ENCODE measurements at regions of chr7 and their contacts with region 1.

Region 1: DNA sequence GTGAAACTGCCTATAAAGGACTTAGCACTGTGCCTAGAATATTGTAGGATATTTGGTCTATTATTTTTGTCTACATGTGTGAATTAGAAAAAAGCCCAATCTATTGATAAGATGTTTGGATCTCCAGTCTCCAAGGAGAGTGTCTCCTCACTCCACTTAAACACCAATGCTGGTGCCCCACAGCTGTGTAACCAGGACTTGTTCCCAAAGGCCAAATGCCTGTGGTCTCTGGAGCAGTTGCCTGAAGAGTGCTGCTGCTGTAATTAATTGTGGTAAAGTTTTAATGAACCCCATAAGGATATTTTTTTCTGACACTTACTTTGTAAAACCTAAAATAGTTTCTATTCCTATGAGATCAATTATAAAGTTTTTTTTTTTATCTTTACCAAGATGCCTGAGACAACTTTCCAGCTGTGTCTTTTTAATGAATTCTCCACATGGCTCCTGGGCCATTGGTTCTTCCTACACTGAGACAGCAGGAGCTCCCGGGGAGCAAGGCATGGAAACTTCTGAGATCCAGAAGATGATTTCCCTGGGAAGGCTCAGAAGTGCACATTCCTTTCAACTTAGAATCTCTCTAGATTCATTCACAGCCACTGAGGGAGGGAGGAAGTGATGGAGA is 11.2 kb upstream of the OR2A5 start:
- DNase-seq: no peak
- ATAC-seq: no peak
- H3K4me3 ChIP-seq: no peak overlapping the region
- H3K4me3 Mint-ChIP-seq: no peak overlapping the region
- H3K27ac ChIP-seq: no peak overlapping the region
- H3K27ac Mint-ChIP-seq: no peak overlapping the region
- H3K4me1 ChIP-seq: no peaks in the 10 kb centered on the region
- H3K4me1 Mint-ChIP-seq: no peaks in the 10 kb centered on the region
- H3K27me3 ChIP-seq: no peaks in the 10 kb centered on the region
- H3K27me3 Mint-ChIP-seq: peaks cover 6 to 23% (median 13%) of the 10 kb centered on the region in 5 donors

Region 2: GRCh38 chr7:143147072-143147694 is 890.3 kb before region 1 on chr7:
- CTCF ChIA-PET with region 1: no interaction called
- POLR2A ChIA-PET with region 1: no interaction called
- intact Hi-C with region 1: no loop called
- DNase-seq: no peak
- ATAC-seq: no peak
- H3K4me3 ChIP-seq: no peak overlapping the region
- H3K4me3 Mint-ChIP-seq: no peak overlapping the region
- H3K27ac ChIP-seq: no peak overlapping the region
- H3K27ac Mint-ChIP-seq: no peak overlapping the region
- H3K4me1 ChIP-seq: no peaks in the 10 kb centered on the region
- H3K4me1 Mint-ChIP-seq: no peaks in the 10 kb centered on the region
- H3K27me3 ChIP-seq: no peaks in the 10 kb centered on the region
- H3K27me3 Mint-ChIP-seq: peaks cover 0 to 28% (median 15%) of the 10 kb centered on the region in 5 donors

Region 3: DNA sequence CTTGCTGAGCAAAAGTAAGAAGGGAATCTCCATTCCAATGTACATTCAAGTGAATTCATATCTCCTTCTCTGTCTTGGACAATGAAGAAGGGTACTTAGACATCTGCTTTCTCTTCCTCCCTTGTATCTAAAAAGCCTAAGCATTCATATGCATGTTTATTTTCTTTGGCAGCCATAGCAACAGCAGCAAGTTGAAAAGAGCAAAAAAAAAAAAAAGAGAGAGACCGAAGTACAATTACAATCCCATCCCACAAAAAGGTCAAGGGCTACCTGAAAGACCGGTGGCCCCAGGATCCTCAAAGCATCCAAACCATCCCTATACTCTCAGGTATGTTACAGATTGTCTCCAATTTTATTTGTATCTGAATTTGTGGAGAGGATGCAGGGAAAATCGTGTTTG is 78.7 kb before region 1 on chr7:
- CTCF ChIA-PET with region 1: no interaction called
- POLR2A ChIA-PET with region 1: no interaction called
- intact Hi-C with region 1: loop called in 1 of 2 experiments (anchors 5 kb)
- DNase-seq: no peak
- ATAC-seq: no peak
- H3K4me3 ChIP-seq: no peak overlapping the region
- H3K4me3 Mint-ChIP-seq: no peak overlapping the region
- H3K27ac ChIP-seq: no peak overlapping the region
- H3K27ac Mint-ChIP-seq: no peak overlapping the region
- H3K4me1 ChIP-seq: no peaks in the 10 kb centered on the region
- H3K4me1 Mint-ChIP-seq: no peaks in the 10 kb centered on the region
- H3K27me3 ChIP-seq: peaks cover 0 to 3% of the 10 kb centered on the region in 2 donors
- H3K27me3 Mint-ChIP-seq: peaks cover 19 to 41% (median 37%) of the 10 kb centered on the region in 5 donors

Measured in naive thymus-derived CD4-positive, alpha-beta T cell (primary cell).